A673 (cell line): ENCODE measurements at regions of chr2 and their contacts with region 1.

Region 1: DNA sequence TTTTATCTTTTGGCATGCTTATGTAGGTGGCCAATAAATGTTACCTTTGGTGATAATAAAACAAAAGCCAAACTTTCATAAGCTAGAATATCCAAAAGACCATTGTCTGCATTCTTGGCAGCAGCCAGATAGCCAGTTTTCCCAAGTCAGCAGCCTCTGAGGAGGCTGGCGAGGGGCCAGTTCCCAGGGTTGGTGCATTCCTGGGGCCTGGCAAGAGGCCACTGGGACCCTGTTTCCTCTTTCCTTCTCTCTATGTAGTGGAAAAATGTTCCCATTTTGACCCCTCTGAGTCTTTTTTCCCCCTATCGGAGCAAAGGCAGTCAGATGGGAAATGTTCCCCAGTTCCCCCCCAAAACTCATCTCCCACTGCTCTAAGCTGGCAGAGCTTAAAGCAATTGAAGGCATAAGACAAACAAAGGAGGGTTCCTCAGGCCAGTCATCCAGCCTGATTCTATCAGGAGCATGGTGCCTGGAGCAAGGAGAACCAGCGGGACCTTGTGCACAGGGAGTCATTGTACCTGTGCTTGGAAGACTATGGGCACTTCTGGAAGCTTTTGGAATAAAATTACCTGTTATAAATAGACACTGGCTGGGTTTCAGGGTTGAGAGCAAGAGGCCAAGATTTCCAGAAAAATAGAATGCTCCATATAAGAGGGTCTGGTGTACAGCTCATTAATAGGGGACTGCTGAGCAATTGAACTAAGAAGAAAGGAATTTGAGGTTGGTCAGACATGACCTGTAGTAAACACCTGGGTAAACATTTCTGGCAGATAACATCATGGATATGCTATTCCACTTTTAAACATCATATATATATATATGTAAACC is 63.5 kb downstream of the NCKAP5 start:
- DNase-seq: peak; percentile 84
- H3K4me3 ChIP-seq: no peak overlapping the region
- H3K27ac ChIP-seq: peak overlapping the region; percentile 99
- H3K4me1 ChIP-seq: peaks cover 96% of the 10 kb centered on the region
- H3K27me3 ChIP-seq: no peaks in the 10 kb centered on the region
- CTCF ChIP-seq: no peak

Region 2: DNA sequence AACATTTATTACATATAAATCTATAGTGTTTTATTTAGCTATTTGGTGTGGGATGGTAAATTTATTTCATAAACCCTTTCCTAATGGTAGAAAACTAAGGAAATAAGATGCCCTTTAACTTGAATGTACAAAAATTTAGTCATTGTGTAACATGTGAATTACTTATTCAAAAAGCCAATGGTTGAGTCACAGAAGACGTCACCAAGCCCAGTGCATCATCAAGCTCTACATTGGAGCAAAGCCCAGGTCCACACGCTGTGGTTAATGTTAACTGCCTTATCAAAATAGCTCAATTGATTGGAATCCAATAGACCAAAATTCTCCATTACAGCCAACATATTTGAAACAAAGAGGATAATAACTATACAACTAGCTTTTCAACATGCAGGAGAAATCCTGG is 689.3 kb before region 1 on chr2:
- CTCF ChIA-PET with region 1: no interaction called
- POLR2A ChIA-PET with region 1: no interaction called
- intact Hi-C with region 1: loop called (anchors 10 kb)
- DNase-seq: peak; percentile 53
- H3K4me3 ChIP-seq: no peak overlapping the region
- H3K27ac ChIP-seq: no peak overlapping the region
- H3K4me1 ChIP-seq: peaks cover 50% of the 10 kb centered on the region
- H3K27me3 ChIP-seq: no peaks in the 10 kb centered on the region
- CTCF ChIP-seq: no peak

Region 3: DNA sequence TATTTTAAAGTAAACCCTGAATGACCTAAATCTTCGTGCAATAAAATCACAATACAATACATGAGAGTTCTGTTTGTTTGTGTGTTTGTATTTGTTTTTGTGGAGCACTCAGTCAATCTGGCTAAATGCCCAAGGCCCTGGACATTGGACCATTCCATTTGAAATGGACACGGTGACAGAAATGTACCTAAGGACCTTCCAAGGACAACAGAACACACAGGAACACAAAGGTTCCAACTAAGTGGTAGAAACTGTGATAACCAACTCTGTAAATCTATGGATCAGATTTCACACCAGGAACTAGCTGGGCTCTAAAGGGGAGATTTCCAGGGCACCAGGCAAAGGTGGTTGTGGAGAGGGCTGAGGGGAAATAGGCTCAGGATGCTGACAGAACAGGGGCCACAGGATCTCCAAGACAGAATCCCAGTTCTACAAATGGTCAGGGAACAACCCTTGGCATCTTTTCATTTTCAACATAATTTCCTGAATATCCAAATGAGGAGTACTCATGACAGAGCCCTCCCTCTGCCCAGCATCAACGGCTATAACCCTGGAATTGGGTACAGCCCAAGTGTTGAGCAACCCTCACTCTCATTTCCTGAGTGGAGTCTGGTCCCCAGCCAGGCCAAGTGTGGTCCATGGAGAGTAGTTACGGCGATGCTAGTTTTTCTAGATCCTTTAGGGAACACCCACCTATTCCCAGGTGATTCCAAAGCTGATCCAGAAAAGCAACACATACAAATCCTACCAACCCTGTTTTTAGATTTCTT is 15.0 kb before region 1 on chr2:
- CTCF ChIA-PET with region 1: no interaction called
- POLR2A ChIA-PET with region 1: no interaction called
- intact Hi-C with region 1: no loop called
- DNase-seq: peak; percentile 50
- H3K4me3 ChIP-seq: no peak overlapping the region
- H3K27ac ChIP-seq: peak overlapping the region; percentile 6
- H3K4me1 ChIP-seq: peaks cover 23% of the 10 kb centered on the region
- H3K27me3 ChIP-seq: no peaks in the 10 kb centered on the region
- CTCF ChIP-seq: no peak

Region 4: DNA sequence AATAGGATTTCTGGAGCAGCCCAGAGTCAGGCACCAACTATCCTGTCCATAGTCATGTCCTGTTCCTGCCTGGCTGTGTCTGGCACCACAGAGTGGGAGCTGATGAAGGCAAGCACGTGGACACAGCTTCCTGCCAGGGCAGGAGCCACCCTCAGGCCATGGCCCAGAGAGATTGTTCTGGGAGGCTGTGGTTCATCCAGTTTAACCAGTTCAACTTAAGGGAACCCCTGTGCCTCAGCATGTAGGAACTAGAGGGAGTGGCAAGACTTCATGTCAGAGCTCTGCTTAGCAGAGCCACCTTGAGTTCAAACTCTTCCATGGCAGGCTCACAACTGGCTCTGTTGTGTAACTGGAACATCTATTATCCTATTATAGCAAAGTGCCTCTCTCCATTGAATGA is 136.7 kb after region 1 on chr2:
- CTCF ChIA-PET with region 1: no interaction called
- POLR2A ChIA-PET with region 1: no interaction called
- intact Hi-C with region 1: loop called (anchors 10 kb)
- DNase-seq: peak; percentile 62
- H3K4me3 ChIP-seq: no peak overlapping the region
- H3K27ac ChIP-seq: no peak overlapping the region
- H3K4me1 ChIP-seq: peaks cover 14% of the 10 kb centered on the region
- H3K27me3 ChIP-seq: no peaks in the 10 kb centered on the region
- CTCF ChIP-seq: peak; percentile 58

Region 5: GRCh38 chr2:133829450-133830065 is 324.8 kb after region 1 on chr2:
- CTCF ChIA-PET with region 1: no interaction called
- POLR2A ChIA-PET with region 1: interaction called, 15 read pairs
- intact Hi-C with region 1: no loop called
- DNase-seq: no peak
- H3K4me3 ChIP-seq: no peak overlapping the region
- H3K27ac ChIP-seq: no peak overlapping the region
- H3K4me1 ChIP-seq: peaks cover 11% of the 10 kb centered on the region
- H3K27me3 ChIP-seq: no peaks in the 10 kb centered on the region
- CTCF ChIP-seq: no peak